ENCODE measurements at regions of chr7 and their contacts with region 1.

Region 1: DNA sequence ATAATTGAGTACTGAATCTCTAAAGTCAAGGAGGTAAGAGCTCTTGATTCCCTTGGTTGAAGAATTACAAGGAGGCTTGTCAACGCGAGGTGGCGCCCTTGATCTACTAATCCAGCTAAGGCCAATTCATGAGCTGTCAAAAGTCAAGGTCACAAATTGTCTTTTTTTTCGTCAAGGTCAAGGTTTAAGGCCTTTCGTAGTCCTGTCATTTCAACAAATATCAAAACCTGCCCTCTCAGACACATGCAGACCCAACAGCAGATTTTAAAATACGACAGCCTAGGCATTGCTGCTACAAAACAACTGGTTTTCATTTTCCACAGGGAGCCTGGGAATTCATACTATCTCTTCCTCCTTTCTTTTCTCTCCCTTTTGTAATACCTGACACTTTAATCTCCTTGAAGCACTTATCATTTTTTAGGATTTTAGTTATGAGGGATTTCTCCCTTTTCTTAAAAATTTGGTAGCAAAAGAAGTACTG is 3.6 kb downstream of the HOXA13 start:
- DNase-seq: peak in 1 of 2 donors; percentile 78
- ATAC-seq: no peak
- H3K4me3 ChIP-seq: peak overlapping the region in 3 of 4 donors; percentile 1 to 67 (median 28)
- H3K27ac ChIP-seq: peak overlapping the region in 3 of 4 donors; percentile 21 to 90 (median 44)
- H3K4me1 ChIP-seq: peaks cover 9 to 37% of the 10 kb centered on the region in 2 donors
- H3K27me3 ChIP-seq: peaks cover 11 to 41% (median 20%) of the 10 kb centered on the region in 3 donors
- CTCF ChIP-seq: peak; percentile 72 to 77 (median 75)
- POLR2A ChIP-seq: no peak

Region 2: GRCh38 chr7:26200444-26201246 is 995.7 kb before region 1 on chr7 and contains the start of gene HNRNPA2B1:
- in situ Hi-C with region 1: loop called in 2 of 4 experiments (anchors 25 kb)
- intact Hi-C with region 1: no loop called
- DNase-seq: peak; percentile 95
- ATAC-seq: peak; percentile 82 to 86
- H3K4me3 ChIP-seq: peak within 1 kb of the TSS; percentile 79 to 98 (median 94)
- H3K27ac ChIP-seq: peak within 1 kb of the TSS; percentile 97 to 100 (median 98)
- H3K4me1 ChIP-seq: peaks cover 39 to 50% of the 10 kb centered on the region in 2 donors
- H3K27me3 ChIP-seq: no peaks in the 10 kb centered on the region
- CTCF ChIP-seq: peak in 1 of 5 experiments; percentile 15
- POLR2A ChIP-seq: peak; percentile 100
- total RNA-seq, gene HNRNPA2B1: 155 to 242 (median 166) TPM

Region 3: GRCh38 chr7:26937939-26938623 is 258.2 kb before region 1 on chr7:
- in situ Hi-C with region 1: no loop called
- intact Hi-C with region 1: no loop called
- DNase-seq: no peak
- ATAC-seq: no peak
- H3K4me3 ChIP-seq: no peak overlapping the region
- H3K27ac ChIP-seq: no peak overlapping the region
- H3K4me1 ChIP-seq: no peaks in the 10 kb centered on the region
- H3K27me3 ChIP-seq: no peaks in the 10 kb centered on the region
- CTCF ChIP-seq: no peak
- POLR2A ChIP-seq: no peak

Region 4: GRCh38 chr7:27662490-27663205 is 466.3 kb after region 1 on chr7 and contains the start of gene HIBADH:
- in situ Hi-C with region 1: loop called in 1 of 4 experiments (anchors 10 kb)
- intact Hi-C with region 1: loop called (anchors 1 kb)
- DNase-seq: peak; percentile 99 to 100
- ATAC-seq: peak; percentile 96 to 98
- H3K4me3 ChIP-seq: peak within 1 kb of the TSS; percentile 73 to 99 (median 92)
- H3K27ac ChIP-seq: peak within 1 kb of the TSS; percentile 95 to 100 (median 97)
- H3K4me1 ChIP-seq: peaks cover 10 to 14% of the 10 kb centered on the region in 2 donors
- H3K27me3 ChIP-seq: no peaks in the 10 kb centered on the region
- CTCF ChIP-seq: peak; percentile 12 to 46 (median 29)
- POLR2A ChIP-seq: peak; percentile 96 to 99
- total RNA-seq, gene HIBADH: 42.2 to 56.4 (median 49.0) TPM

Region 5: GRCh38 chr7:27774717-27775328 is 578.5 kb after region 1 on chr7:
- in situ Hi-C with region 1: loop called in 2 of 4 experiments (anchors 25 kb)
- intact Hi-C with region 1: loop called (anchors 5 kb)
- DNase-seq: no peak
- ATAC-seq: no peak
- H3K4me3 ChIP-seq: no peak overlapping the region
- H3K27ac ChIP-seq: no peak overlapping the region
- H3K4me1 ChIP-seq: peaks cover 10 to 29% of the 10 kb centered on the region in 2 donors
- H3K27me3 ChIP-seq: no peaks in the 10 kb centered on the region
- CTCF ChIP-seq: peak in 4 of 5 experiments; percentile 26 to 62 (median 44)
- POLR2A ChIP-seq: no peak

Region 6: DNA sequence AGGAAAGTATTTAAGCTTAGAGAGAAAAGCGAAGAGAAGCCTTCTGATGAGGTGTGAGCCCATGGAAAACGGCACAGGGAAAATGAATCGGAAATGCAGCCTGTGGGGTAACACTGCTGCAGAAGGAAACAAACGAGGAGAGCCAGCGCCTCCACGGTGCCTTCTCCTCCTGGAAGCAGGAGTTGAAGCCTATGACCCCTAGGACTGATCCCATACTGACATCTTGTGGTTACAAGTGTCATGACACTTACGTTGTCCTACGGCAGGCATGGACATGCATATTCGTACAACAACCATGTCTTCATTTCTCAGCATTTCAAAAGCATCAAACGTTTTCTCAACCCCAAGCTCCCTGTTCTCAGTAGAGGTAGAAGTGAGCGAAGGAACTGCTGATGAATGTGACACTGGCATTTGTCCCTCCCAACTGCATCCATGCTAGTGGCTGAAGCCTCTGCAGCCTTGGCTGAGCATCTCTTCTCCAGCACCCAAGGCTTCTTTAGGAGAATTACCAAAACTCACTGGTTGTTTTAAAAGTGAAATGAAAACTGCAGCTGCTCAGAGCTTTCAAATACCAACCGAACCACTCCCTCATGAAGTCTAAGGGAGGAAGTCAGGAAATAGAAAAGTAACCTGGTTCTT is 824.1 kb after region 1 on chr7:
- in situ Hi-C with region 1: loop called in 2 of 4 experiments (anchors 10 kb)
- intact Hi-C with region 1: loop called (anchors 1 kb)
- DNase-seq: peak; percentile 56 to 76
- ATAC-seq: peak; percentile 83 to 89
- H3K4me3 ChIP-seq: no peak overlapping the region
- H3K27ac ChIP-seq: no peak overlapping the region
- H3K4me1 ChIP-seq: peaks cover 22 to 38% of the 10 kb centered on the region in 2 donors
- H3K27me3 ChIP-seq: no peaks in the 10 kb centered on the region
- CTCF ChIP-seq: peak; percentile 80 to 93 (median 87)
- POLR2A ChIP-seq: no peak

Region 7: DNA sequence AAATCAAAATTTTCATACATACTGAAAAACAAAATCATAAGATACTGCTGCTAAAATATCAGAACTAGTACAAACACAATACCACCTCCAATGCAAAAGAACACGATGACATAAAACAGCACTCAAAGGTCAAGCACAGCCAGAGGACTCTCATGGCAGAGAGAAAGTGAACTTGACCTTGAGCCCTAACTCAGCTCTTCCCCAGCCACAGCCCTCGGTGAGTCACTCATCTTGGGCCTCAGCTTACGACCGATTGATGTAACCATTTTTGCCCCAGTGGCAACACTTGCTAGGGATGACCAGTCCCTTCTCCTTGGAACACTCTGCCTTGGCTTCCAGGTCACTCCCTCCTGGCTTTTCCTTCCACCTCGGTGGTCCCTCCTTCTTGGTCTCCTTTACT is 906.5 kb after region 1 on chr7:
- in situ Hi-C with region 1: loop called in 1 of 4 experiments (anchors 25 kb)
- intact Hi-C with region 1: loop called (anchors 5 kb)
- DNase-seq: peak; percentile 49 to 81
- ATAC-seq: peak; percentile 44 to 83
- H3K4me3 ChIP-seq: no peak overlapping the region
- H3K27ac ChIP-seq: peak overlapping the region; percentile 8 to 89 (median 33)
- H3K4me1 ChIP-seq: peaks cover 42 to 44% of the 10 kb centered on the region in 2 donors
- H3K27me3 ChIP-seq: no peaks in the 10 kb centered on the region
- CTCF ChIP-seq: no peak
- POLR2A ChIP-seq: peak; percentile 16 to 18

Measured in gastrocnemius medialis (tissue), 4 donors.